WTC11 (cell line): ENCODE measurements at regions of chr10 and their contacts with region 1.

Region 1: DNA sequence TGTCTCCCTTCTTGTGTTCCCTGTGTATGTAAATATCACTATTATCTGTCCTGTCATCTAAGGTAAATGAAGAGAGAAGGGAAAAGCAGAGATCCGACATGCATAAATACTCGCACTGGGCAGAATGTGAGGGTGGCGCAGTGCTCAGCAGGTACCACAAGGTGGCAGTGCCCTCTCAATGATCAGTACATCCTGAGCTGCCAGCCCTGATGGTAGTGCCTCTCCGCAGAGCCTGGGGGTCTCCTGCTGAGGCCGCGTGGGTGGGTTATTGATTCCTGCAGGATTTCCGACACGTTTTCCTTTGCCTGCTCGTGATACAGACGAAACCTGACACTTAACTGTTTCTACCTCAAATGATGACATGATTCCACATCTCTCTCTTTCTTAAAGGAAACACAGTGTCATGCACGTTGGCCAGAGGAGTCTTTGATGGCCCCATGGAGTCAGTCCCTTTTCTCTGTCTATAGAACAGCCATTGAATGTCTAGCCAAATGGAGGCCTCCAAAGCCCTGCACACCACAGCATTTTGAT is 19.8 kb downstream of the RGR start:
- DNase-seq: peak; percentile 84
- ATAC-seq: peak; percentile 95
- H3K4me3 Mint-ChIP-seq: no peak overlapping the region
- H3K27ac Mint-ChIP-seq: no peak overlapping the region
- H3K4me1 Mint-ChIP-seq: peaks cover 13% of the 10 kb centered on the region
- H3K27me3 Mint-ChIP-seq: peaks cover 10% of the 10 kb centered on the region
- CTCF ChIP-seq: peak; percentile 78

Region 2: GRCh38 chr10:84202349-84202748 is 62.3 kb before region 1 on chr10:
- CTCF ChIA-PET with region 1: no interaction called
- POLR2A ChIA-PET with region 1: no interaction called
- DNase-seq: no peak
- ATAC-seq: no peak
- H3K4me3 Mint-ChIP-seq: no peak overlapping the region
- H3K27ac Mint-ChIP-seq: no peak overlapping the region
- H3K4me1 Mint-ChIP-seq: no peaks in the 10 kb centered on the region
- H3K27me3 Mint-ChIP-seq: 0 out of 2 replicates have a peak, but pooled peaks cover 4% of the 10 kb centered on the region
- CTCF ChIP-seq: no peak

Region 3: GRCh38 chr10:84296091-84296981 is 31.7 kb after region 1 on chr10:
- CTCF ChIA-PET with region 1: interaction called, 10 read pairs
- POLR2A ChIA-PET with region 1: no interaction called
- DNase-seq: peak; percentile 21
- ATAC-seq: peak; percentile 90
- H3K4me3 Mint-ChIP-seq: 0 out of 2 replicates have a peak overlapping the region, but pooled peaks have one; percentile 2
- H3K27ac Mint-ChIP-seq: peak overlapping the region; percentile 94
- H3K4me1 Mint-ChIP-seq: peaks cover 50% of the 10 kb centered on the region
- H3K27me3 Mint-ChIP-seq: no peaks in the 10 kb centered on the region
- CTCF ChIP-seq: no peak

Region 4: DNA sequence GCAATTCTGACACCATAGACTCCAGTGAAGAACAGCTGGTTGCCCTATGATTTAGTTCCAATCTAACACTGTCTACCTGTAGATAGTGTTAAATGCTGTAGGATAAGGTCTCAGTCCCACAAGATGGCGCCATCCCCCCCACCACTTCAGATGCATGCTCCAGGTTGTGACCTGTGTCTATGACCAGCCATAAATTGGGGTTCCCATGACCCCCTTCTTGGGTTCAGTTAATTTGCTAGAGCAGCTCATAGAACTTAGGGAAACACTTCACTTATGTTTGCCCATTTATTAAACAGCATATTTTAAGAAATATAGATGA is 76.8 kb after region 1 on chr10:
- CTCF ChIA-PET with region 1: interaction called, 23 read pairs
- POLR2A ChIA-PET with region 1: no interaction called
- DNase-seq: peak; percentile 32
- ATAC-seq: peak; percentile 60
- H3K4me3 Mint-ChIP-seq: no peak overlapping the region
- H3K27ac Mint-ChIP-seq: no peak overlapping the region
- H3K4me1 Mint-ChIP-seq: peaks cover 28% of the 10 kb centered on the region
- H3K27me3 Mint-ChIP-seq: no peaks in the 10 kb centered on the region
- CTCF ChIP-seq: no peak

Region 5: DNA sequence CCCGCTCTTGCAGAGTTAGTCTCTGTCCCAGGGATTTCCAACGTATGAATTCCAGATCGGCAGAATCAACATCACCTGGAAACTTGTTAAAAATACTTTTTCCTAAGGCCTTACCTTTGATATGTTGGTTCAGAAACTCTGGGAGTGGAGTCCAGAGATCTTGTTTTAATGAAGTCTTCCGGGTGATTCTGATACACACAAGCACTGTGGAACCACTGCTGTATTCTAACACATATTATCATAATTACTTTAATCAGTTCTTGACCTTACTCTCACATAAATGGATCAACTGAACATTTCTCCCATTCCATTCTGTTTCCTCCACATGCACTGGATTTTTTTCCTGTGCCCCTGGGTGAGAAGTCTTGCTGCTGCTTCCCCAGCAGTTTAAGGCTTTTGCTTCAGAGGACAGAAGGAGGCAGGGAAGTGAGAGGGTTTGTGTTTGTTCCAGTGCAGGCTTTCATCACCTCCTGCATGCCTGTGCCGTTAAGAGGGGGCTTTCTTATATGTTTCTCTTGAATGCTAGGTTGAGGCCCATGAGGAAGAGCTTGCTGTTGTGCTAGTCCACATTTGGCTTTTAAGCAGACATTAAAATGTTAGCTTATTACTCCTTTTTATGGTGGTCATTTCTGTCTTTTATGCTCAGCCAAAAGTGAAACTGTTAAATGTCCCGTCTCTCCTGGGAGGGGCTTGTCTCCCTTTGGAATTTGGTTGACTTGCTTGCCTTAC is 96.1 kb after region 1 on chr10:
- CTCF ChIA-PET with region 1: interaction called, 10 read pairs
- POLR2A ChIA-PET with region 1: no interaction called
- DNase-seq: no peak
- ATAC-seq: peak; percentile 52; the same call in 1 of the 2 replicates
- H3K4me3 Mint-ChIP-seq: no peak overlapping the region
- H3K27ac Mint-ChIP-seq: peak overlapping the region; percentile 87
- H3K4me1 Mint-ChIP-seq: peaks cover 27% of the 10 kb centered on the region
- H3K27me3 Mint-ChIP-seq: no peaks in the 10 kb centered on the region
- CTCF ChIP-seq: no peak

Region 6: DNA sequence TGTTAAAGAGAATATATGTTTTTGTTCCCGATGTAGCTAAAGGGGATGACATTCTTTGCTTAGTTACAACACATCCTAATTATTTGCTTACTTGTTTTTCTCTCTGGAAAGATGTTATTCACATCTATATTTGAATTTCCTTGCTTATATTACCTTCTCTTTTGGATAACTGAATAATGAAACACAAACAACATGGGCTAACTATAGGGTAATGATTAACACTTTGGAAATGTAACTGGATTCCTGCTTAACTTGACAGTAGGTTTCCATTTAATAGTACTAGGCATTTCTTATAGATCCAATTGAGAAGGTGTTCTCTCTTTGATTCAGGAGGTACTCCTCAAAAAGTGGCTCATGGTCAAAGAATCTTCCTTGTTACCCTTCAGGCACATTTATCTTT is 204.8 kb after region 1 on chr10:
- CTCF ChIA-PET with region 1: no interaction called
- POLR2A ChIA-PET with region 1: no interaction called
- DNase-seq: no peak
- ATAC-seq: no peak
- H3K4me3 Mint-ChIP-seq: no peak overlapping the region
- H3K27ac Mint-ChIP-seq: no peak overlapping the region
- H3K4me1 Mint-ChIP-seq: peaks cover 20% of the 10 kb centered on the region
- H3K27me3 Mint-ChIP-seq: no peaks in the 10 kb centered on the region
- CTCF ChIP-seq: no peak

Region 7: DNA sequence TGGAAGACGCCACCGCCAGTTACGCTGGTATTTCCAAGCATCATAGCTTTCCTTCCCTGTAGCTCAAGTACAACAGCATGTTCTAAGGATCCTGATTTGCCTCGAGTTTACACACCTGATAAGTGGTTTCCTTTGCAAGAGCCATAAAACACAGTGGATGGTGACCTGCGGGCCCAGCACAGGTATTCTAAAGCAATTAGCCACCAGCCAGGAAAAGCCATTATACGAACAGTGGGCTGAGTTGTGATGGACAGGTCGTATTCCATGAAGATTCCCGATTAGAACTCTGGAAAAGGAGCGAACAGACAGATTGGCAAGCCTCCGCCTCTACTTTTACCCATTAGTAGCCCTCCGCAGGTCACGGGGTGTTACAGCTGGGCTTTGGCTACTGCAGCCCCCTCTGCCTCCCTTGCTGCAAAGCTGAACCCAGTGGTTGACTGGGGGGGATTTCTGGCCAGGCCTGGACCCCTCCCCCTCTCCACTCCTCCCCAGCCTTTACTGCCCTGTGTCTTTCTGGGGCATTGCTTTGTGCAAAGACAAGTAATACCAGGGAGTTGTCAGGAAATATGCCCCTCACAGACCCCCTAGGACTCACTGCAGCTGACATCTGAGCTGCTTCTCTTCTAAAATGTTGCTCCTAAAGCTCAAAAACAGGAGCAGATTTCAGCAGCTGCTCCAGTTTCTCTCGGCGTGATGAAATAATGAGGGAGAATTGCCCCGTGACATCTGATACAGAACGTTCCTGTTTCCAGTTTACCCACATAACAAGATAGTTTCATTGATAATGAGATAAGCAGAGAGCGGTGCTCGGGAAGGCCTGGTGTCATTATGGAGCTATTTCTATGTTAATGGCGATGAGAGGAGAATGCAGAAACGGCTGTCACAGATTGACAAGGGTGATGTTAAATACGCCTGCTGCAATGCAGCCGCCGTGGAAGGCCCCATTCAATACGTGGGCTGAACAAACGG is 278.1 kb after region 1 on chr10:
- CTCF ChIA-PET with region 1: interaction called, 261 read pairs
- POLR2A ChIA-PET with region 1: no interaction called
- DNase-seq: no peak
- ATAC-seq: peak; percentile 12; the same call in 1 of the 2 replicates
- H3K4me3 Mint-ChIP-seq: no peak overlapping the region
- H3K27ac Mint-ChIP-seq: no peak overlapping the region
- H3K4me1 Mint-ChIP-seq: peaks cover 22% of the 10 kb centered on the region
- H3K27me3 Mint-ChIP-seq: peaks cover 5% of the 10 kb centered on the region
- CTCF ChIP-seq: no peak